Gastrocnemius medialis (tissue), 4 donors: ENCODE measurements at regions of chr10 and their contacts with region 1.

Region 1: DNA sequence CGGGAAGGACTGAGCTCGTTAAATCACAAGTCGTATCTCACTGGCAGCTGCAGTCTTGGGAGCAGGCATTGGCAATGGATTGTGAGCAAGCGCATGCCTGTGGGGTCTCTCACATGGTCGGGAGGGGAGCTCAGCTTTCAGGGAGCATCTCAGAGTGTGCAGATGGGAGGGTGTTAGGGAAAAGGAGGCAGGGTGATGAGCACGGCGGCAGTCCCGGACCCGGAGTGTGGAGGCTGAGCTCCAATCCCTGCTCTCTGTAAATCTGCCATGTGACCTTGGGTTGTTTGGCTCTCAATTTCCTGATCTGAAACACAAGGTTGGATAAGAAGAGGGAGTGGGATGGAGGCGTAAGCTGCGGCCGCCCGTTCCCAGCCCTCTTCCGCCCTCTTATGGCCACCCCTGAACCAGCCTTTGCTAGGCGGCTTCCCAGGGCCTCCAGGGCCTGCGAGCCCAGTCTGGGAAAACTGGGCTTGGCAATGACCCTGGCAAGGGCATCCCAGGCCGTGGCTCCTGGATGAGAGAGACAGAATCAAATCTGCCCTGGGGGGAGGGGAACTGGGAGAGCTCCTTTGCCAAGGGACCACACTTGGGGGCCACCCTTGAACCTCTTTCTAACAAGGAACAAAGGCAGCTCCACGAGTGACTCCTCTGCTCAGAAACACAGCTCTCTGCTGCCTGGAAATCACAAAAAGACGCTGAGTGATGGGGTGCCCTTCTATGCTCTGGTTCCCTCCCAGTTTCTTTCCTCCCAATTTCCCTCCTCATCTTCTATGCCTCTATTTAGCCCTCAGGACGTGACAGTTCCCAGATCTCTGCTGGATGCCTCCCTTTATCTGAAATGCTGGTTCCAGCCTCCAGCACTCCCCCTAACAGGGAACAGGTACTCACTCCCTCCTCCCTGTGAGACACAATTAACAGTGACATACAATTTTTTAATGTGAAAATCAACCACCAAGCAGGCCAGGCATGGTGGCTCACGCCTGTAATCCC is 41.7 kb upstream of the LOXL4 start:
- DNase-seq: peak; percentile 53 to 69
- ATAC-seq: peak; percentile 75
- H3K4me3 ChIP-seq: no peak overlapping the region
- H3K27ac ChIP-seq: peak overlapping the region in 3 of 4 donors; percentile 2 to 32 (median 5)
- H3K4me1 ChIP-seq: peaks cover 19% of the 10 kb centered on the region in 2 donors
- H3K27me3 ChIP-seq: no peaks in the 10 kb centered on the region
- CTCF ChIP-seq: peak; percentile 74 to 89 (median 83)
- POLR2A ChIP-seq: no peak

Region 2: DNA sequence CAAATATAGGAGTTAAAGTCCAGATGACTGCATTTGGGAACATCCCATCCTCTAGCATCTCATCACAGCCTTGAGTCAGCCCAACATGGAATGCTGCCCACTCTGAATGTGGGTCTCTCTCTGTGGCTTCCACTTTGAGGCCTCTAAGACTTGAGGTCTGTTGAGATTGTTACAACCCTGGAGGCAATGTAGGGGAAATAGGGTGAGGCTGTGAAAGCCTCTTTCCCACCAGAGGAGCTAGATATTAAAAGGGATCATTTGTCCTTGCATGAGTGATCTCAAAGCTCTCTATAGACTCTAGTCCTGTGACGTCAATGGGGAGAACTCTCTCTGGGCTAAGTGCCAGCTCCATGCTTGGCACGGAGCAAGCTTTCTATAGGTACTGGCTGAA is 466.4 kb before region 1 on chr10:
- in situ Hi-C with region 1: no loop called
- intact Hi-C with region 1: no loop called
- DNase-seq: no peak
- ATAC-seq: no peak
- H3K4me3 ChIP-seq: no peak overlapping the region
- H3K27ac ChIP-seq: no peak overlapping the region
- H3K4me1 ChIP-seq: peaks cover 15 to 23% of the 10 kb centered on the region in 2 donors
- H3K27me3 ChIP-seq: no peaks in the 10 kb centered on the region
- CTCF ChIP-seq: no peak
- POLR2A ChIP-seq: no peak

Region 3: DNA sequence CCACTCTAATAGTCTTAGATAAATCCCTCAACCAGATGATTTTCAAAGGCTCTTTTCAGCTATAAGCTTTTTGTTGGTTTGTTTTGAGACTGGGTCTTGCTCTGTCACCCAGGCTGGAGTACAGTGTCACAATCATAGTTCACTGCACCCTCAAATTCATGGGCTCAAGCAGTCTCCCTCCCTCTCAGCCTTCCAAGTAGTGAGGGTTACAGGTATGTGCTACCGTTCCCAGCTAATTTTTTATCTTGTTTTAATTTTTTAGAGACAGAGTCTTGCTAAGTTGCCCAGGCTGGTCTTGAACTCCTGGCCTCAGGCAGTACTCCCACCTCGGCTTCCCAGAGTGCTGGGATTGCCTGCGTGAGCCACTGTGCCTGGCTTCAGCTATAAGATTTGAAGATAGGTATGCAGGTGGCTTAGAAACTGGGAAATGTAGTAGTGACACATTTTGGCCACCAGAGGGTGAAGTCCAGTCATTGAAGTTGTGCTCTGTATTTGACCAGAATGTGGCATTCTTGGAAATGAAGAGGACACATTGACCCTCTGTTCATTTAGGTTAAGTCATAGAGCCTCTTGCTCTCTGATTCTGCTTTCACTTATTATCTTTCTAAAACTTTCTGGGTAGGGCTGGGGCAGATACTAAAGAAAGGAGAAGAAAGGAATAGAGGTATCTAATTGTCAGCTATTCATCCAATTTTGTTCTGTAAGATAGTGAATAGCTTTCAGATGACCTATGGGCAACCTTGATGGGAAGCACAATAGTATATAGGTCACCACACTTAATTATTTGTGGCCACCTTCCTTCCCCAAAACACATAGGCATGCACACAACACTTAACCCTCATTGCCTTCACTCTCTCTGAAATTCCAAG is 139.2 kb before region 1 on chr10:
- in situ Hi-C with region 1: loop called in 1 of 4 experiments (anchors 5 kb)
- intact Hi-C with region 1: loop called (anchors 2 kb)
- DNase-seq: no peak
- ATAC-seq: peak in 1 of 2 donors; percentile 49
- H3K4me3 ChIP-seq: no peak overlapping the region
- H3K27ac ChIP-seq: no peak overlapping the region
- H3K4me1 ChIP-seq: peaks cover 10 to 11% of the 10 kb centered on the region in 2 donors
- H3K27me3 ChIP-seq: no peaks in the 10 kb centered on the region
- CTCF ChIP-seq: peak; percentile 50 to 71 (median 59)
- POLR2A ChIP-seq: no peak